A673 (cell line): ENCODE measurements at regions of chr17 and their contacts with region 1.

Region 1: GRCh38 chr17:8991514-8992285 is 26.2 kb upstream of the PIK3R5 start:
- DNase-seq: peak; percentile 86
- H3K4me3 ChIP-seq: no peak overlapping the region
- H3K27ac ChIP-seq: no peak overlapping the region
- H3K4me1 ChIP-seq: no peaks in the 10 kb centered on the region
- H3K27me3 ChIP-seq: no peaks in the 10 kb centered on the region
- CTCF ChIP-seq: peak; percentile 86

Region 2: DNA sequence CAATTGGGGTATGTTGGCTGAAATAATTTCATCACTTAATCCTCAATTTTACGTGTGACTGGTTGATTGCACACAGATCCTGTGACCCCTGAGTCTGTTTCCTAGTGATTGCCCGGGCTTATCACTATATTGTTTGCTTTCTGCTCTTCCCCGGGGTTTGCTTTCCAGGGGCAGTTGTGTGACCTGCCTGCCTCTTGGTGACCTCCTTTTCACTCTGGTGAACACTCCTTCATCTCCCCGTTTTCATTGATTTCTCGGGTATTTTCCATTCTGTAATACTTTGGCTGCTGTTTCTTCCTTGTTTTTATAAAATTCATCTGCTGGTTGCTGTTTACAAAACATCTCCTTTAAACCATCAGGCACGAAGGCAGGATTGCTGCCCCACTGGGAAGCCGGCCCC is 65.6 kb after region 1 on chr17:
- CTCF ChIA-PET with region 1: no interaction called
- POLR2A ChIA-PET with region 1: no interaction called
- intact Hi-C with region 1: no loop called
- DNase-seq: no peak
- H3K4me3 ChIP-seq: no peak overlapping the region
- H3K27ac ChIP-seq: no peak overlapping the region
- H3K4me1 ChIP-seq: no peaks in the 10 kb centered on the region
- H3K27me3 ChIP-seq: no peaks in the 10 kb centered on the region
- CTCF ChIP-seq: no peak

Region 3: GRCh38 chr17:9170853-9171252 is 179.2 kb after region 1 on chr17:
- CTCF ChIA-PET with region 1: no interaction called
- POLR2A ChIA-PET with region 1: no interaction called
- intact Hi-C with region 1: no loop called
- DNase-seq: no peak
- H3K4me3 ChIP-seq: no peak overlapping the region
- H3K27ac ChIP-seq: no peak overlapping the region
- H3K4me1 ChIP-seq: no peaks in the 10 kb centered on the region
- H3K27me3 ChIP-seq: no peaks in the 10 kb centered on the region
- CTCF ChIP-seq: no peak

Region 4: GRCh38 chr17:9402590-9403199 is 411.0 kb after region 1 on chr17:
- CTCF ChIA-PET with region 1: interaction called, 3 read pairs
- POLR2A ChIA-PET with region 1: no interaction called
- intact Hi-C with region 1: loop called (anchors 10 kb)
- DNase-seq: peak; percentile 71
- H3K4me3 ChIP-seq: no peak overlapping the region
- H3K27ac ChIP-seq: no peak overlapping the region
- H3K4me1 ChIP-seq: no peaks in the 10 kb centered on the region
- H3K27me3 ChIP-seq: no peaks in the 10 kb centered on the region
- CTCF ChIP-seq: peak; percentile 69